GM10248 (cell line): ENCODE measurements at regions of chr19 and their contacts with region 1.

Region 1: DNA sequence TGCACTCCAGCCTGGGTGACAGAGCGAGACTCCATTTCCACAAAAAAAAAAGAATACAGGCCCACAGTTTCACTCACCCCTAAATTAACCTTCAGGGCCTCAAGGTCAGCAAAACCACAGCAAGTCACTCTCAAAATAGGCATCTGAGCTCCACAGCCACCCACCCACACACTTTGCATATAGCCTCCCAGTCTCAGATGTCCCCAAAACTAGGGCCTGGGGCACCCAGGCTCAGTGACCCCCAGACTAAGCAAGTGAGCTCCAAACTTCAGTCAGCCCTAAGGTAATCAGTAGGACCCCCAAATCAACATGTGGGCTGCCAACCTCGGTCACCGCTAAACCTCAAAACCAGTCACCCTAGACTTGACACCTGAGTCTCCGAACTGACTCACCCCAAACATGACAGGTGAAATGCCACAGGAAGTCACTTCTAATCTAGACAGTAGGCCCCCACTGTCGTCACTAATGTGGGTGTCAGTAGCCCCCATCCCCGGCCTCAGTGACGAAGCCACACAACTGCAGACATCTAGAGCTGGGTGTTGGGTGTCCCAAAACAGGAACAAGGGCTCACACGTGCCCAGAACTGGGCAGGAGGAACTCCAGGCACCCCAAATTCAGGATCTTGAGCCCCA is 13.9 kb downstream of the RABAC1 start:
- DNase-seq: peak; percentile 88
- CTCF ChIP-seq: no peak

Region 2: GRCh38 chr19:41866284-41866683 is 79.0 kb before region 1 on chr19:
- CTCF ChIA-PET with region 1: interaction called, 52 read pairs
- POLR2A ChIA-PET with region 1: interaction called, 12 read pairs
- DNase-seq: no peak
- CTCF ChIP-seq: no peak

Region 3: GRCh38 chr19:41959056-41960053 is 14.1 kb after region 1 on chr19 and contains the start of gene RABAC1:
- CTCF ChIA-PET with region 1: interaction called, 23 read pairs
- POLR2A ChIA-PET with region 1: no interaction called
- DNase-seq: peak; percentile 95
- CTCF ChIP-seq: peak; percentile 32

Region 4: GRCh38 chr19:41974652-41975051 is 29.4 kb after region 1 on chr19:
- CTCF ChIA-PET with region 1: no interaction called
- POLR2A ChIA-PET with region 1: no interaction called
- DNase-seq: no peak
- CTCF ChIP-seq: no peak

Region 5: DNA sequence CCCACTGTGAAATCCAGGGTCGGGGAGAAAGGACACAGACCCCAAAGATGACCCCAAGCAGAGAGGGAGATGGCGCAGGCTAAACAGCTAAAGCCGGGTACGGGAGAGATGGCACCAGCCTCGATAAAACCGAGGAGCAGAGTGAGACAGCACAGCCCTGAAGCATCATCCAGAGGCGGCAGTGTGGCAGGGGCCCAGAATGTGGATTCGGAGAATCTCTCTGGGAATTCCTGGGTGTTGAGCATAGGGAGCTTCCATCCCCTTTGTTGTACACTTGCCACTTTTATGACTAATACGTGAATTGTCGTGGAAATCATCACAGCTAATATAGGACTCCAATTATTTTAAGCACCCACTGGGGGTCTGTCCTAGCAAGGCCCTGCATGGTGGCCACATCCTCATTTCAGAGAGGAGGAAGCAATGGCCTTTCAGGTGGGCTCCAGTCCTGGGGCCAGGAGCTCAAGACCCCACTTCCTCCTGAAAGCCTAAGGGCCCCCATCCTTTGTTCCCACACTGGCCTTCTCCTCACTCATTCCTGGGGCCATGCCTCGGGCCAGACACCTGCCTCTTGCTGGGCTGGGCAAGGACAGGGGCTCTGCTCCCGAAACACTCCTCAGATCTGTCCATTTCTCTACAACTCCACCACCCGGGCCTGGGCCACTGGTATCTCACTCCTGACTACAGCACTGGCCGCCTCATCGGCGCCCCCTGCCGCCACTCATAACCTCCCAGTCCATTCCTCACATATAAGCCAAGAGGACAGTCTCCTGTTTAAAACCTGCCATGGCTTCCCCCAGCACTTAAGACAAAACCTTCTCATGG is 78.1 kb after region 1 on chr19:
- CTCF ChIA-PET with region 1: no interaction called
- POLR2A ChIA-PET with region 1: no interaction called
- DNase-seq: peak; percentile 50
- CTCF ChIP-seq: peak; percentile 54